ENCODE measurements at regions of chr16 and their contacts with region 1.

Region 1: DNA sequence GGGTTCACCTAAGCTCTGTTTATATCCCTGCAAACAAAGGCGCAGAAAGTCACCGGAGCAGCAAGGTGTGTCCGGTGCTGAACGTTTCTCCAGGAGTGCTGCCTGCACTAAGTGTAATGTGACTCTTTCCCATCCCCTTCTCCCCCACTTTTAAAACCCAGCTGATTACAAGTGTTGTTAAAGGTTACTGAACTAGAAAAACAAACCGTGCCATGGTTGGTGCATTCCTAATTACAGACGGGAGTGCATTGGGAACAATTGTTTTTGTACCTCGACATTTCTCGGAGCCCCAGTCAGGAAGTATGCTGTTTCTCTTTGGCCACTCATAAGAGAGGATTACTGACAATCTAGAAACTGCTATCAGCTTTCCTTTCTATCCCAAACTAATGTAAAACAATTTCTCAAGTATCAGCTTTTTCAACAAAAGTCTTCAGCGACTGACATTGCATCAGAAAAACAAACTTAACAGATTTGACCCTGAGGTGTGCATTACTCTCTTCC is 441.0 kb upstream of the SALL1 start:
- DNase-seq: no peak
- ATAC-seq: peak; percentile 41
- H3K4me3 Mint-ChIP-seq: no peak overlapping the region; the same call in 1 of the 2 replicates
- H3K27ac Mint-ChIP-seq: peak overlapping the region; percentile 75; the same call in 1 of the 2 replicates
- H3K4me1 Mint-ChIP-seq: peaks cover 22% of the 10 kb centered on the region
- H3K27me3 Mint-ChIP-seq: no peaks in the 10 kb centered on the region
- CTCF ChIP-seq: no peak

Region 2: GRCh38 chr16:51416926-51417325 is 175.1 kb before region 1 on chr16:
- CTCF ChIA-PET with region 1: no interaction called
- POLR2A ChIA-PET with region 1: interaction called, 11 read pairs
- DNase-seq: no peak
- ATAC-seq: no peak
- H3K4me3 Mint-ChIP-seq: no peak overlapping the region
- H3K27ac Mint-ChIP-seq: no peak overlapping the region
- H3K4me1 Mint-ChIP-seq: peaks cover 17% of the 10 kb centered on the region
- H3K27me3 Mint-ChIP-seq: no peaks in the 10 kb centered on the region
- CTCF ChIP-seq: no peak

Region 3: GRCh38 chr16:51607201-51607646 is 15.2 kb after region 1 on chr16:
- CTCF ChIA-PET with region 1: no interaction called
- POLR2A ChIA-PET with region 1: no interaction called
- DNase-seq: no peak
- ATAC-seq: no peak
- H3K4me3 Mint-ChIP-seq: no peak overlapping the region
- H3K27ac Mint-ChIP-seq: no peak overlapping the region
- H3K4me1 Mint-ChIP-seq: no peaks in the 10 kb centered on the region; the same call in 1 of the 2 replicates
- H3K27me3 Mint-ChIP-seq: no peaks in the 10 kb centered on the region; the same call in 1 of the 2 replicates
- CTCF ChIP-seq: no peak

Measured in WTC11 (cell line).